ENCODE measurements at regions of chr3 and their contacts with region 1.

Region 1: DNA sequence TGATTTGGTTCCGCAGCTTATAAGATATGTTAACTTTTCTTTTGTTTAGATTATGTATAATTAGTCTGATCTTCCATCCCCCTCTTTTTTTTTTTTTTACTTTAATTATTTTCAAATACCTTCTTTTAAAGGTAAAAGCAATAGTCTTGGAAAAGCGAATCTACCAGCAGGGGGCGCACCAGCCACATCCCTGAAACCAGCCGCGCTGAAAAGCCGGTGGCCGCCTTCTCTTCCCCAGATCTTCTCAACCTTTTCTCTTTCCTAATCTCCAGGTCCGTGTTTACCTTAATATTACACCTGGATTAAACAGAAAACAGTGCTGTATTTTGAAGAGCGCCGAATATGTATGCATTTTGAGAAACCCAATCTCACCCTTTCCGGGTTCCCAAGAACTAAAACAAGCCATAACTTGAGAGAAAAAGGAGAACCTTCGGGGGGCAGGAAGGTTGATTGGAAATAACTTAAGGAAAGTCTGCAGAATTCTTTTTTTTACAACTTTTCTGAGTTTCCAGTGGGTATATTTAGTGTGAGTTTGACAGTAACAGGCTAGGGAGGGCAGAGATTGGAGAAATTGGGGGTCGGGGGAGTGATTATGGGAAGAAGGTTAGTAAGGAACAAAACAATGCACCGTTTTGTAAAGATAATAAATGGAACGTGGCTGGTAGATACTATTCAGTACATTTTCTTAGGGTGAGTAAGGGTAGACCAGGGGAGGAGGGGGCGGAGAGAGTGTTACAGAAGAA is 2.0 kb upstream of the SOX2 start:
- DNase-seq: peak; percentile 80
- ATAC-seq: peak in 1 of 2 donors; percentile 64
- H3K4me3 ChIP-seq: no peak overlapping the region
- H3K27ac ChIP-seq: no peak overlapping the region
- H3K4me1 ChIP-seq: peaks cover 25% of the 10 kb centered on the region
- H3K27me3 ChIP-seq: peaks cover 99% of the 10 kb centered on the region
- CTCF ChIP-seq: peak; percentile 72

Region 2: DNA sequence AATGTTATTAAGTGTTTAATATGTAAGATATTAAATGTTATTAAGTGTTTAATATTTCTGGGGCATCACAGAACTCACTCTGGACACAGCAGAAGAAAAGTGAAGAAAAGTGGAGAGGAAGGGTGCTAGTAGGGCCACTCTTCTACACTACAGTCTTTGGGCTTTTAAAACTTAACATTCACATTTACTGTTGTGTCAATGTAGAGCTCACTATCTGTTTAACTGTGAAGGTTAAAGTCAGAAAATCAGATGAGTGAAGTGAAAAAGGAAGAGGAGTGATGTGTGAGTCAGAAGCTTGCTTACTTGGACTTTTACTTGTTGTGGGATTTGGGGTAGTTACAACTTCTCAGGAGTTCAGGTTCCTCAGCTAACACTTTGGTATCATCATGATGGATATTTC is 574.8 kb before region 1 on chr3:
- intact Hi-C with region 1: no loop called
- DNase-seq: no peak
- ATAC-seq: no peak
- H3K4me3 ChIP-seq: no peak overlapping the region
- H3K27ac ChIP-seq: no peak overlapping the region
- H3K4me1 ChIP-seq: no peaks in the 10 kb centered on the region
- H3K27me3 ChIP-seq: no peaks in the 10 kb centered on the region
- CTCF ChIP-seq: no peak

Region 3: DNA sequence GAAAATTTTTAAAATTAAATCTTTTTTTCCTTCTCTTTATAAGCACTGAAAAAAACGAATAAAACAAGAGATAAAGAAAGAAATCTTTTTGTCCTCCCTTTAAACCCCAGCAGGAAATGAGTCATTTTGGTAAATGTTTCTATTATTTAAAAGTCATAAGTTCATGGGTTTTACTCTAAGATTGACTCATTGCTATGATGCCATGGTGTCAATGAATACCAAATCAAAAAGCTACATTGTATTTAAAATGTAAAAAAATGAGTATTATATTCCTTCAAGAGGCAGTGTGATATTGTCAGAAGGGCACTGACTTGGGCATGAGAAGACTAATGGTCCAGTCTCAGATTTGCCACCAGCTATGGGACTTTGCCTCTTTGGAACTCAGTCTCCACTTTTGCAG is 416.7 kb before region 1 on chr3:
- intact Hi-C with region 1: no loop called
- DNase-seq: no peak
- ATAC-seq: no peak
- H3K4me3 ChIP-seq: no peak overlapping the region
- H3K27ac ChIP-seq: no peak overlapping the region
- H3K4me1 ChIP-seq: no peaks in the 10 kb centered on the region
- H3K27me3 ChIP-seq: no peaks in the 10 kb centered on the region
- CTCF ChIP-seq: no peak

Region 4: DNA sequence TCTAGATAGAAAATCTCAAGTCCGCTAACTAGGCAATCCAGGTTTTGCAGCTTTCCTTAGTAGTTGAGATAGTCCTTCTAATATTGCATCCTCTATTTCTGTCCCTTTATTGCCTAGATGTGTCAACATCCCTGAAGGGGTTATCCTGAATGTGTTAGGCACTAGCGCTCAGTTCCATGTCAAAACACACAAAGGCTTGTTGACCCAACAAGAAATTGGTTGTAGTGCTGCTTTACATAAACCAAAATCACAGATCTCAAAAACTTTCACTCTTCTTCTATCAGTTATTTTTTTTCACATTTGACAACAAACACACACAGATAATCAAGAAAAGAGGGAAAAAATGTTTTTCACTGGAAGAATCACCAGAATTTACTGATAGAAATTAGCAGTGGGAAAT is 49.4 kb before region 1 on chr3:
- intact Hi-C with region 1: no loop called
- DNase-seq: no peak
- ATAC-seq: no peak
- H3K4me3 ChIP-seq: no peak overlapping the region
- H3K27ac ChIP-seq: no peak overlapping the region
- H3K4me1 ChIP-seq: no peaks in the 10 kb centered on the region
- H3K27me3 ChIP-seq: no peaks in the 10 kb centered on the region
- CTCF ChIP-seq: no peak

Region 5: DNA sequence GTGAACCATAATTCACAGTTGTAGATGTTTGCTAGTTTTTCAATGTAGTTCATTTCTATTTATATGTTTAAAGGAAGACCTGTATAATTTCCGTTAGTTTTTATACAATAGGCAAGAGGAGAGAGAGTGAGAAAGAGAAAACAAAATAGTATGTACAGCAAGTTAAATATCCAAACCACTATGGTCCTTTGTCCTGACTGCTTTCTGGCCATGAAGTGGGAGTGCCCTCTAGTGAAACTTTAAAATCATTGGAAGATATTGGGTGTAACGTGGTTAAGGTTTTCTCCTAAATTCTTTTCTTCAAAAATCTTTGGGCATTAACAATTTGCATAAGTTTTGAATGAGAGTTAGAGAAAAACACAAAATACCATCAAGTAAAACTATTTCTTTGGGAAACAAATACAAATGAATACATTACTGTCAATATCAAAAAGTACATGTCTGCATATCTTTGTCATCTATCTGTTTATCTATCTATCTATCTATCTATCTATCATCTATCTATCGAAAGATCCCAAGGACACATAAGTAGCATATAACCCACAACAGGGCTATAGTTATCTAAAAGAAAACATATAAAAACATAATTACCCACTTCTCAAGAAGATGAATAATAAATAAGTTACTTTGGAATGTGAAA is 549.0 kb after region 1 on chr3:
- intact Hi-C with region 1: loop called (anchors 5 kb)
- DNase-seq: no peak
- ATAC-seq: peak in 1 of 2 donors; percentile 64
- H3K4me3 ChIP-seq: no peak overlapping the region
- H3K27ac ChIP-seq: no peak overlapping the region
- H3K4me1 ChIP-seq: no peaks in the 10 kb centered on the region
- H3K27me3 ChIP-seq: peaks cover 7% of the 10 kb centered on the region
- CTCF ChIP-seq: peak; percentile 45